ENCODE measurements at regions of chr10 and their contacts with region 1.

Region 1: GRCh38 chr10:125707541-125708468 is 11.7 kb upstream of the EDRF1 start:
- DNase-seq: peak; percentile 70

Region 2: DNA sequence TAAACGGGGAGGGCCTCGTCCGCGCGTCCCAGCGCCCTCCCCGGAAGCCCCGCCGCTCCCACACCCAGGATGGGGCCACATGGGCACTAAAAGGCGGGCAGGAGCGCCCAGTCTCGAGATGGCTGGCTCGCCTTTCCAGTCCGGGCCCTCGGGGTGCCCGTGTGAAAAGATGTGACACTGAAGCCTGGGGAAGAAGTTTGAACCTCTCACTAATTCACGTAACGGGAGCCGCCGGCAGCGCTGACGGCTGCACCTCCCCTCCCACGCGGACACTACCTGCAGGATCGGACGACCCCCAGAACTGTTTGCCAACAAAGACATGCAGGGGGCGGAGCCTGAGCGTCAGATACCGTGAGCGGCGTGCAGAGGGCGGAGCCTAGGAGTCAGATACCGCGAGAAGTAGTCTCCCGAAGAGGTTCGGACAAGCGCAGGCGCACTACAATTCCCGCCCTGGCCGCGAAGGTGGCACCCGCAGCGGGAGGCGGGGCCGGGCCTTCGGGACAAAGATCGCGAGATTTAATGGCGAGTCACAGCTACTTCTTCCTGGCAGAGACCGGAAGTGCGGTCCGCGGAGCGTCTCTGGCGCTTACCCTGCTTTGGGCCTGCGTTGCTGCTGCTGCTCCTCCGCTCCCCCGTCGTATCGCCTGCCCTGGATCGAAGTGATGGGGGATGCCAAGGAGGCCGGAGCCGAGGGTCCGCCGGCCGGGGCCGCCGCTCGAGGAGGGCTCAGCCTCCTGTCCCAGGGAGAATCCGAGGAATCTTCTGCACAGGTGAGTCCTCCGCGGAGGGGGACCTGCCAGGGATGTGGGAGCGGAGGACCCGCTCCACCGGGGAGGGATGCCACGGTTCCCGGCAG is 11.6 kb after region 1 on chr10 and contains the start of gene EDRF1:
- CTCF ChIA-PET with region 1: no interaction called
- POLR2A ChIA-PET with region 1: interaction called, 23 read pairs
- DNase-seq: peak; percentile 100